OCI-LY7 (cell line): ENCODE measurements at regions of chr13 and their contacts with region 1.

Region 1: DNA sequence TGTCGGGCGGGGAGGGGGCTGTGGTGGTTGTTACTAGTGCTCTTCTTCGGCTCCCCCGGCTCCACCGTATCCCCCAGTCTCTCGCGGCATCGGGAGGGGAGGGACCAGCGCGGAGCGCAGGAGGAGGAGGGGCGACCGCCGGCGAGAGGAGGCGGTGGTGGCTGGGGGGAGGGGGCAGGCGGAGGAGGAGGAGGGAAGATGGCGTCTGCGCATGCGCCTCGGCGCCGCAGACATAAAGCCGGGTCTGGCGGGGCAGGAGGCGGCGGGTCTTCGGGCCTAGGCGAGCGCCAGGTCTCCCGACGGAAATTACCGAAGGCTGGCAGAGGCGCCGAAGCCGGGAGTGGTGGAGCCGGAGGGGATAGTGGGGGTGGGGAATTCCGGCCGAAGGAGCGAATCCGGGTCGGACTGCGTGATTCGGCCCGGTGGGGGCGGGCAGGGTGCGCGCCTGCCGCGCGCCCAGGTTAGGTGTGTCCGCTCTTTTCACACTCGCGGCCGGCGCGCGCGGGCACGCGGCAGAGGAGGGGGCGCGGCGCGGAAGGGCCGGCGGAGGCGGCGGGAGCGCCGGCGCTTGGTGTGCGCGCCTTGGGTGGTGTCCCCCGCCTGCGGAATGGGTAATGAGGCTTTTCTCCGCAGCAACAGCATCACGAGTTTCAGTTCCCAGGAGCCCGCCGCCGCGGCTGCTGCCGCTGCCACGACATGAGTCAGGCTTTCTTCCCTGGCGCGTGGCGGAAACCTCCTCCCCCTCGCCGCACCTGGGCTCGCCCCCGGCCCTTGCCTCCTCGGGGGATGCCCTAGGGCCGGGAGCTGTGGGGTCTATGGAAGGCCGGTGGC is 1.3 kb upstream of the TSC22D1 start:
- DNase-seq: peak; percentile 93
- H3K4me3 ChIP-seq: peak overlapping the region; percentile 91
- H3K27ac ChIP-seq: peak overlapping the region; percentile 78
- H3K4me1 ChIP-seq: peaks cover 26% of the 10 kb centered on the region
- CTCF ChIP-seq: no peak

Region 2: DNA sequence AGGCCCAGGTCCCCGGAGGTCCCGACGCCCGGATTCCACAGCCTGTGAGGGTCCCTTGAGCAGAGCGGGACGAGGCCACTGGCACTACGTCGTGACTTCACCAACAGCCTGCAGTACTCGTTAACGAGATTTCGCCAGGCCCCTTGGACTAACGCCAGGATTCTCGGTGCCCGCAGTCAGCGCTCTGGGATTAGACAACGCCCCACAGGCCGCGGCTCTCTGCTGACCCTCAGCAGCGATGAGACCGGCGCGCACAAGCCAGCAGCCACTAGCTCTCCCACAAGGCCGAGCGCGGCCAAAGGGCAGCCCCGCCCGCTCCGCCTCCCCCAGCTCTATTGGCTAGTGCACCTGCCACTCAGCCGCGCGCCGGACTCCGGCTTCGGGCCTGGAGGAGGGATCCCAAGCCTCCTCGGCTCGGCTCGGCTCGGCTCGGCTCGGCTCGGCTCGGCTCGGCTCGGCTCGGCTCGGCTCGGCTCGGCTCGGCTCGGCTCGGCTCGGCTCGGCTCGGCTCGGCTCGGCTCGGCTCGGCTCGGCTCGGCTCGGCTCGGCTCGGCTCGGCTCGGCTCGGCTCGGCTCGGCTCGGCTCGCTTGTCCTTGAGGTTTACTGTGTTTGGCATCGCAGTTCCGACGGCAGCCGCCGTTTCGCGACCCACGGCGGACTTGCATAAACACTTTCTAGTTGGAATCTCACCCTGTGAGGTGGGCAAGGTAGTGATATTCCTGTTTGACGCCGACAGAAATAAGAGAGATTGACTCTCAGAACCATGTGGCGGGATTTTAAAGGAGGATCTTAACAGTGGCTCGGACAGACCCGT is 435.5 kb before region 1 on chr13:
- CTCF ChIA-PET with region 1: no interaction called
- POLR2A ChIA-PET with region 1: no interaction called
- intact Hi-C with region 1: loop called (anchors 5 kb)
- DNase-seq: peak; percentile 94
- H3K4me3 ChIP-seq: peak overlapping the region; percentile 78
- H3K27ac ChIP-seq: no peak overlapping the region
- H3K4me1 ChIP-seq: peaks cover 36% of the 10 kb centered on the region
- CTCF ChIP-seq: no peak

Region 3: GRCh38 chr13:44484562-44485138 is 92.8 kb before region 1 on chr13:
- CTCF ChIA-PET with region 1: no interaction called
- POLR2A ChIA-PET with region 1: no interaction called
- intact Hi-C with region 1: loop called (anchors 5 kb)
- DNase-seq: no peak
- H3K4me3 ChIP-seq: no peak overlapping the region
- H3K27ac ChIP-seq: no peak overlapping the region
- H3K4me1 ChIP-seq: peaks cover 5% of the 10 kb centered on the region
- CTCF ChIP-seq: no peak

Region 4: DNA sequence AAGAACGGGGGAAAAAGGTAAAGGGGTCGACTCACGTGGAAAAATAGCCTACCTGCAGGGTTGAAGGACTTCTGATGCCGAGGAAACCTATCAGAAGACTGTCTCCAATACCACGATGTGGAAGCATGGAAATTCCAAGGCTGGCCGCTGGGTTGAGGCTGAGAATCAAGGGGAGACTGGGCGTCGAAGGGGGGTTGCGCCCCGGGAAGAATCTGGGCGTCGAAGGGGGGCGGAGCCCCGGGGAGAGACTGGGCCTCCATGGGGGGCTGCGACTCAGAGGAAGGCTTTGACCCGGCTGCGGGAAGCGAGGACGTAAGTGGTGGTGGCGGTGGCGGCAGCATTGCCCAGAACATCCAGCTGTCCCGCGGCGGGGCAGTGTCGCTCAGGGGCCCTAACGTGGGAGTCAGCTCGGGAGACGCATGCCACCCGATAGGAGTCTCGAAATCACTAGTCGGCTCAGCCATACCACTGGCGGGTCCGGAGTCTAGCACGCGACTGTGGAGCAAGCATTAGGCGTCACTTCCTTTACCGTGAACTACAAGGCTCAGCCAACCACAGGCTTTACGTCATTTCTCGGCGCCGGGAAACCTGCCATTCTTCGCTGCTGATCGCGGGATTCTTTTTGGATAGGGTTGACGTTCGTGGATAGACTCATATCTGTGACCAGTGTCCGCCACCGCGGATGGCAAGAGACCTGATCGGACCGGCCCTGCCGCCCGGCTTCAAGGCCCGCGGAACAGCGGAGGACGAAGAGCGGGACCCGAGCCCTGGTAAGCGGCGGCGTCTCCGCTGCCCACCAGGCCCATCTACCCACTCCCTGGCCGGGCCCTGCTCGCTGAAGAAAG is 411.7 kb after region 1 on chr13 and contains the starts of genes GPALPP1 and NUFIP1:
- CTCF ChIA-PET with region 1: no interaction called
- POLR2A ChIA-PET with region 1: no interaction called
- intact Hi-C with region 1: loop called (anchors 10 kb)
- DNase-seq: peak; percentile 93
- H3K4me3 ChIP-seq: peak within 1 kb of the TSS; percentile 88
- H3K27ac ChIP-seq: peak within 1 kb of the TSS; percentile 16
- H3K4me1 ChIP-seq: peaks cover 27% of the 10 kb centered on the region
- CTCF ChIP-seq: no peak
- total RNA-seq, gene GPALPP1: 50.1 and 54.5 TPM in 2 replicates
- total RNA-seq, gene NUFIP1: 5.4 and 6.8 TPM in 2 replicates